Motor neuron (in vitro differentiated cells): ENCODE measurements at regions of chr3 and their contacts with region 1.

Region 1: GRCh38 chr3:148943506-148944205 is 47.7 kb upstream of the GYG1 start:
- ATAC-seq: peak; percentile 85 to 100 (median 96)
- H3K4me3 ChIP-seq: no peak overlapping the region
- H3K27ac ChIP-seq: no peak overlapping the region
- H3K4me1 ChIP-seq: peaks cover 0 to 4% of the 10 kb centered on the region in 2 donors

Region 2: DNA sequence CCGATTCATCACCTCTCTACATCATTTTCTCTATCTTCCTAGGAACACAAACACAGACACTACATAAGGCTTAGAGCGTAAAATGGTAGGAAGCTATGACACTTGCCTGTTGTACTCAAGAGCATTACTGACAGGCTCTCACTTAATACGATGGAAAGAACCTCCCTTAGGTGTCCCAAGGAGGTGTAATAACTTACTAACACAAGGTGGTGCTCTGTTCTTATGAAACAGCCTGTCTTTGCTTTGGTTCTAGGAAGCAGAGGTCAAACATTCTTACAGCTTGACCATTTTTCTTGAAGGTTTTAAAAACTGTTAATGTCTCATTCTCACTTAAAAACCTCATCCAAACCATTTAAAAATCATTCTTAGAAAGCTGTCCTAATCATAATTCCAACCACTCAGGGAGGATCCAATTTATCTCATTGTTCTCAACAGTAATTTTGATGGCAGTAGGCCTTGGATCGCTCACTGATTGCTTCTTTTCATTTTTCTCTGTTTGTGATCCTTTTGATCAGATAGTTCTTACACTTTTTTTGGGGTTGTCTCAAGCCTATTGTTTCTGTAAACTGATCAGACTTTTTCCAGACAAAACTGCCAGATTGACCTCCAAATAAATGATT is 563.8 kb before region 1 on chr3:
- in situ Hi-C with region 1: loop called in 5 of 9 experiments (anchors 25 kb)
- ATAC-seq: peak; percentile 46 to 98 (median 76)
- H3K4me3 ChIP-seq: no peak overlapping the region
- H3K27ac ChIP-seq: no peak overlapping the region
- H3K4me1 ChIP-seq: no peaks in the 10 kb centered on the region

Region 3: GRCh38 chr3:148718982-148719862 is 224.4 kb before region 1 on chr3:
- in situ Hi-C with region 1: loop called in 2 of 9 experiments (anchors 10 to 25 kb)
- ATAC-seq: no peak
- H3K4me3 ChIP-seq: no peak overlapping the region
- H3K27ac ChIP-seq: no peak overlapping the region
- H3K4me1 ChIP-seq: no peaks in the 10 kb centered on the region

Region 4: GRCh38 chr3:148727247-148727646 is 216.4 kb before region 1 on chr3:
- in situ Hi-C with region 1: loop called in 3 of 9 experiments (anchors 10 to 25 kb)
- ATAC-seq: peak; percentile 53 to 86 (median 74)
- H3K4me3 ChIP-seq: no peak overlapping the region
- H3K27ac ChIP-seq: no peak overlapping the region
- H3K4me1 ChIP-seq: no peaks in the 10 kb centered on the region

Region 5: DNA sequence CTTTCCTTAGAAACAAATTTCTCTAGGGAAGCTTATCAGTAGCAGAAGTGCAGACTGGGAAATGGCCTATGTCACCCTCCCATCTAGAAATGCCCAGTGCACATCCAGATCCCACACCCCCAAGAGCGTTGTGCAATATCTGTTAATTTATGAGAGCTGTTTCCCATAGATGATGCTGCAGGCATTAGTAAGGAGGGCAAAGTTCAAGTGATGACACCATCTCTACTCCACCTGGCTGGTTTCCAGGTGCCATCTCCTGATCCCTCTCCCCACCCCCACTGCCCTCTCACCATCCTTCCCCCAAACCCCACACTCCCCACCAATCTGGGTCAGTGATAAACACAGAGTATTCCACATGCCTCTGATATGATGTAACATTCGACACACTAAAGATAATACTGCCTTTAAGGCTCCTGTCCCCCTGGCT is 206.5 kb before region 1 on chr3:
- in situ Hi-C with region 1: loop called in 1 of 9 experiments (anchors 10 kb)
- ATAC-seq: peak; percentile 20 to 95 (median 74)
- H3K4me3 ChIP-seq: no peak overlapping the region
- H3K27ac ChIP-seq: no peak overlapping the region
- H3K4me1 ChIP-seq: peaks cover 3 to 6% of the 10 kb centered on the region in 2 donors

Region 6: DNA sequence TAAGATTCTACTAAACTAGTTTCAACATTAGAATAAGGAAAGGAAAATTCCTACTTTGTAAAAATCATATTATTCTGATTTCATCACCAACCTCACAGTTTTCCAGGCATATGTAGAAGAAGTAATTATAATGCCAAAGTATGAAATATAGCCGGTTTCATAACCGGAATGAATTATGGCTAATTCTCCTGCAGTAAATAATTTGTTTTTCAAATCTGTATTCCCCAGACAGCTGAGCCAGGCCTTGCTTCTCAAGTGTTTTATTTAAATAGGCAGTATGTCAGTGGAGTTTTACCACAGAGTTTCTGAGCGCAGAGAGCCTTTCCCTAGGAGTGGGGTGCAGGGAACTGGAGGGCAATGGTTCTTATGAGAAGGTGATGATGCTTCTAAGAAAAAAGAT is 87.3 kb before region 1 on chr3:
- in situ Hi-C with region 1: loop called in 1 of 9 experiments (anchors 10 kb)
- ATAC-seq: peak in 5 of 8 experiments; percentile 16 to 74 (median 57)
- H3K4me3 ChIP-seq: no peak overlapping the region
- H3K27ac ChIP-seq: no peak overlapping the region
- H3K4me1 ChIP-seq: no peaks in the 10 kb centered on the region

Region 7: DNA sequence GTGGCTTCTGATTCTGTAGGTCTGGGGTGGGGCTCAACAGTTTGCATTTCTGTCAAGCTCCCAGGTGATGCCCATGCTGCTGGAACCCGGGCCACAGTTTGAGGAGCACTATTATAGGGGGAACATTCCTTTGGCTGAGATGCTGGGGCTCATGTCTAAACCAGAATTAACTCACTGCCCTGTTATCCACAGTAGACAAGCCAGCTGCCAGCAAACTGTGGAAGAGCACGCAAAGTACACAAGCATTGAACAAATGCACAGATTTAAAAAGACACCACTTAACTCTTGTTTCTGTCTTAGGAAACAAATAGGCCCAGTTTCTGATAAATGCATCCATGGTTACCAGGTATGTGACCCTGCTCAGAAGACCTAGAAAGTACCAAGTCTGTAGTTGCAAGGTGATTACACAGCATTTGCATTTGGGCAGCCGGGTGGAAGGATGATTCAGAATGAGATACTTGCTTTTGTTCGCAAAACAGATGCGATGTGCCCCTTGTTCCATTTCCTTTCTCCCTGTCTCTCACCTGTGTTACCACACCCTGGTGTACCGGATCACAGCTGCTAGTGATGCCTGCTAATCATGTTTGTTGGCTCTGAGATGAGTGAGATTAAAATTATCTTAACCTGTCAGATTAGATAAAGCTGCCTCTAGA is 60.1 kb after region 1 on chr3:
- in situ Hi-C with region 1: no loop called
- ATAC-seq: no peak
- H3K4me3 ChIP-seq: no peak overlapping the region
- H3K27ac ChIP-seq: no peak overlapping the region
- H3K4me1 ChIP-seq: peaks cover 0 to 7% of the 10 kb centered on the region in 2 donors

Region 8: GRCh38 chr3:149547938-149548668 is 604.4 kb after region 1 on chr3:
- in situ Hi-C with region 1: no loop called
- ATAC-seq: peak in 6 of 8 experiments; percentile 21 to 91 (median 59)
- H3K4me3 ChIP-seq: no peak overlapping the region
- H3K27ac ChIP-seq: no peak overlapping the region
- H3K4me1 ChIP-seq: peaks cover 0 to 10% of the 10 kb centered on the region in 2 donors